ENCODE measurements at regions of chr6 and their contacts with region 1.

Region 1: DNA sequence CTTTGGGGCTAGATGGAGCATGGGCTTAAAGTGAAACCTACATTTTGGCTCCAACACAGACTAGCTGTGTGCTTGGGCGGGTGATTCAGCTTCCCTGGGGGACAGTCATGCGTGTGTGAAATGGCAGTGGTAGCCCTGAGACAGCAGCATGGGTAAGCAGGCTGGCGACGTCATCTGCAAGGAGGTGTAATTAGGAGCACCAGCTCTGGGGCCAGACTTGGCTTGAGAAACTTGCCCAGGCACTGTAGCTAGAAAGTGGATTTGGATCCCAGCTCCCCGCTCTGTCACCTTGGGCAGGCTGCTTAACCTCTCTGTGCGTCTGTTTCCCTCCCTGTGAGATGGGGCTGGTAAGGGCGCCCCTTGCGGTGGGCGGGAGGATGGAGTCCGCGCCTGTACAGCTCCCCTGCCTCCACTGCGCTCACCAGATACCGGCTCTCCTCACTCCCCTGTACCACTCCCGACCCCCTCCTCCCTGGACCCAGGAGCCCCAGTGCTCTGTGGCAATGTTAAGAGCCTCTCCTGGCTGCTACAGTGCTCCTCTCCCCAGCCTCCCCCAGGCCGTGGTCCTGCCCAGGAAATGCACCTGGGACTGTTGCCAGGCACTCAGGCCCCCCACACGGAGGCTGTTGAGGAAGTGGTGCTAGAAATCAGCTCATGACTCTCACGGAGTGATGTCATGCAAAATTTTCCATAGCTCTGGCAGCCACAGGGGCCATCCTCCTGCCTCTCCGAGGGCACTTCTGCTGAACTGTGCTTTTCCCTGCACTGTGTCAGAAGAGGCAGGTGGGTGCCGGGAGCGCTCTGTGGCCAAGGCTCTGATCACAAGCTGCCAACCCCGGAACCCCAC is 44.6 kb downstream of the SYNJ2 start:
- DNase-seq: peak; percentile 91 to 95
- H3K4me3 ChIP-seq: peak overlapping the region; percentile 36 to 44
- H3K27ac ChIP-seq: peak overlapping the region; percentile 81 to 84
- H3K4me1 ChIP-seq: peaks cover 4 to 25% of the 10 kb centered on the region in 2 donors
- H3K27me3 ChIP-seq: no peaks in the 10 kb centered on the region
- CTCF ChIP-seq: peak; percentile 36 to 50 (median 46)

Region 2: DNA sequence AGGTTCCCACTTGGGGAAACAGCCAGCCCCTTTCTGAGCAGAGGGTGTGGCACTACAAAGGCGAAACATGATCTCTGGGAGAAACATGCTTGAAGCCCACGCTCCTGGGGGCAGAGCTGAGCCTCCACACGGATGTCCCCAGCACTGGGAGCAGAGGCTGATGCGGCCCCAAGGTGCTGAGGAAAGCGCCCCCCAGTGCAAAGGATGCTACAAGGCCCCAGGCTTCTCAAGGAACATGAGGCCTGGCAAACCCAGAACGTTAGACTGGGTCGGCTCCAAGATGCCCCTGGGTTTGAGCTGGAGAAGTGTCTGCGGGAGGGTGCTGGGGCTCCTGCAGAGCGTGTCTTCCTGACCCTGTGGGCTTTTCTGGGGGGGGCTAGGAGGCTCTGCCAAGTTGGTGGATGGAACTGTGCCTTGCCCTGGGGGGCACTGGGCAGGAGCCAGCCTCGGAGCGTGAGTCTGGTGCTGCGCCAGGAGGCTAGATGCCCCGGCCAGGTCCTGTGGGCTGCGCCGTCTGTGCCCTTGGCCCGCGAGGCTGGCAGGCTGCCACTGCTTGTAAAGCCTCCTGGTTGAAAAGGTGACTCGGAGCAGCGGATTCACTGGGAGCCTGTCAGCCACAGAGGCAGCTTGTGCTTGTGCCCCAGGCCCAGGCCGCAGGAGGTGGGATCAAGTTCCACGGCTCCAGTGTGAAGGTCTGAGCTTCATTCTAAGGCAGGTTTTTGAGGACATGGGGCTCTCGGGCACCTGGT is 36.6 kb before region 1 on chr6:
- intact Hi-C with region 1: no loop called
- DNase-seq: no peak
- H3K4me3 ChIP-seq: peak overlapping the region; percentile 16 to 22
- H3K27ac ChIP-seq: peak overlapping the region; percentile 0 to 59
- H3K4me1 ChIP-seq: peaks cover under 1 to 14% of the 10 kb centered on the region in 2 donors
- H3K27me3 ChIP-seq: no peaks in the 10 kb centered on the region
- CTCF ChIP-seq: no peak

Region 3: GRCh38 chr6:158002951-158003853 is 23.1 kb before region 1 on chr6:
- intact Hi-C with region 1: loop called (anchors 2 kb)
- DNase-seq: peak in 1 of 2 donors; percentile 90
- H3K4me3 ChIP-seq: peak overlapping the region in 1 of 2 donors; percentile 24
- H3K27ac ChIP-seq: peak overlapping the region; percentile 90
- H3K4me1 ChIP-seq: peaks cover 23 to 44% of the 10 kb centered on the region in 2 donors
- H3K27me3 ChIP-seq: no peaks in the 10 kb centered on the region
- CTCF ChIP-seq: no peak